ENCODE measurements at regions of chr20 and their contacts with region 1.

Region 1: DNA sequence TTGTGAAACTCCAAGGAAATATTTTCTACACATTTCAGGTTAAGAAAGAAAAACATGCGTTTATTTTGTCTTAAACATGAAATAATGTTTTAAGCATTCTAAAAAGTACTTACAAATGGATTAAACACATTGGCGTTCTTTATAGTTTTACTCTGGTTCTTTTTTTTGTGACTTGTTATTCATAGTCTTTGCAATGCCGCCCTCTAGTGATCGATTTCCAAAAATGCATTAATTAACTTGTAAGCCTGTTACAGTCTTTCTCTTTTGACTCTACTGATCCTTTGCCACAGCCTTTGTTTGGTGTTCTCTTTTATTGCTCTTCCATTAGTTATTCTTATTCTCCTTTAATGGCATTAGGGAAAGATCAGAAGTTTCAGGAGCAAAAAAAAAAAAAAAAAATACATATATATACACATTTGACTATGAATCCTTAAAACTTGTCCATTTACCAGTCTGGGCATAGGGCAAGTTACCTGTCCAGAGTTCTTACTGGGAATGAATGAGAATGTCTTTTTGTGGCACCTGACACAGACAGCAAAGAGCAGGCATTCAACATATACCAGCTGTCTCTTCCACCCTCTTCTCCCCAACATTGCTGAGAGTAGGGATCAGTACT is 59.9 kb downstream of the MACROD2 start:
- DNase-seq: no peak
- H3K4me3 ChIP-seq: no peak overlapping the region
- H3K27ac ChIP-seq: no peak overlapping the region
- H3K4me1 ChIP-seq: peaks cover 0 to 7% (median 4%) of the 10 kb centered on the region in 4 donors
- H3K27me3 ChIP-seq: no peaks in the 10 kb centered on the region
- CTCF ChIP-seq: peak; percentile 56 to 68 (median 61)
- EP300 ChIP-seq: no peak
- POLR2A ChIP-seq: no peak

Region 2: GRCh38 chr20:13819885-13820645 is 235.2 kb before region 1 on chr20:
- intact Hi-C with region 1: loop called (anchors 2 kb)
- DNase-seq: no peak
- H3K4me3 ChIP-seq: no peak overlapping the region
- H3K27ac ChIP-seq: peak overlapping the region in 1 of 4 donors; percentile 7
- H3K4me1 ChIP-seq: no peaks in the 10 kb centered on the region
- H3K27me3 ChIP-seq: no peaks in the 10 kb centered on the region
- CTCF ChIP-seq: peak; percentile 68 to 72 (median 71)
- EP300 ChIP-seq: no peak
- POLR2A ChIP-seq: no peak

Region 3: GRCh38 chr20:13953227-13953626 is 102.0 kb before region 1 on chr20:
- intact Hi-C with region 1: loop called (anchors 10 kb)
- DNase-seq: no peak
- H3K4me3 ChIP-seq: no peak overlapping the region
- H3K27ac ChIP-seq: no peak overlapping the region
- H3K4me1 ChIP-seq: no peaks in the 10 kb centered on the region
- H3K27me3 ChIP-seq: no peaks in the 10 kb centered on the region
- CTCF ChIP-seq: no peak
- EP300 ChIP-seq: no peak
- POLR2A ChIP-seq: no peak

Measured in esophagus muscularis mucosa (tissue), 4 donors.